Head of caudate nucleus (tissue), 42 donors: ENCODE measurements at regions of chr1 and their contacts with region 1.

Region 1: GRCh38 chr1:212665241-212666115 is 34.2 kb downstream of the BATF3 start:
- DNase-seq: peak; percentile 50 to 92 (median 80)

Region 2: DNA sequence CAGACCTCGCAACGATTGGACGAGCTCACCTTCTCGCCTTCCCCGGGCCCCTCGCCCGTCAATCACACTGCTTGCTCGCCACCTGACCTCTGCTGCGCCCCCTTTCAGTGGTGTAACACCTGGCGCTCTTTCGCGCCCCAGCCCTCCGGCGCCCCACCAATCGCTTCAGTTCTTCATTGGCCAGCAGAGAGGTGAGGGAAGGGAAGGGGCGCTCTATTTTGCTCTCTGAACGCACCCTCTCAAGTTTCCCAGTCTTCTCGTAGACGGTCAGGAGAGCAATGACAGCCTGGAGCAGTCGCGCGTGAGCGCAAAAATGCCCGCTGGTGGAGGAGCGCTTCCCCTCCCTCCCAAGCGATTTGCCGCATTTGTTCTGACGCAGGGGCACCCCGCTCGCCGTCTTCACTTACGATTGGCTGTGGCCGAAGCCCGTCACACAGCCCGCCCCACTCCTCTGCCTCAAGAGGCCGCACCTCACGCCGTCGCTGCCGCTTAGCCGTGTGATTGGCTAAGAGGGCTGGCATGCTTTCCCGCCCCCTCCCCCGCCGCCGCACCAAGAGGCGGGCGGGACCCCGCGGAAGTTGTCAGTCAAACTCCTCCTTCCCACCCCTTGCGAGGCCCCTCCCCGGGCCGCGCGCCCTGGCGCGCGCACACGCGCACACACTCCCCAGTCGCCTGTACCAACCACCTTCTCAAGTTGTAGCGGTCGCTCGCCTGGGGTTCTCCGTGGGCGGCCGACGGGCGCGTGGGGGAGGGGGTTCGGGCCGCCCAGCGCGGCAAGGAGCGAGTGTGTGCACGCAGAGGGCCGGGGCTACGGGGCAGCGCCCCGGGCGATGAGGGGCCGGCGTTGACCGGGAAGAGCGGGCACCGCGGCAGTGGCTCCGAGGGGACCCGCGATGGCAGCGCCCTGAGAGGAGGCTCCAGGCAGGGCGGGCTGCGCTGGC is 380.5 kb before region 1 on chr1 and contains the start of gene PPP2R5A:
- intact Hi-C with region 1: no loop called
- DNase-seq: peak; percentile 97 to 100 (median 99)

Region 3: DNA sequence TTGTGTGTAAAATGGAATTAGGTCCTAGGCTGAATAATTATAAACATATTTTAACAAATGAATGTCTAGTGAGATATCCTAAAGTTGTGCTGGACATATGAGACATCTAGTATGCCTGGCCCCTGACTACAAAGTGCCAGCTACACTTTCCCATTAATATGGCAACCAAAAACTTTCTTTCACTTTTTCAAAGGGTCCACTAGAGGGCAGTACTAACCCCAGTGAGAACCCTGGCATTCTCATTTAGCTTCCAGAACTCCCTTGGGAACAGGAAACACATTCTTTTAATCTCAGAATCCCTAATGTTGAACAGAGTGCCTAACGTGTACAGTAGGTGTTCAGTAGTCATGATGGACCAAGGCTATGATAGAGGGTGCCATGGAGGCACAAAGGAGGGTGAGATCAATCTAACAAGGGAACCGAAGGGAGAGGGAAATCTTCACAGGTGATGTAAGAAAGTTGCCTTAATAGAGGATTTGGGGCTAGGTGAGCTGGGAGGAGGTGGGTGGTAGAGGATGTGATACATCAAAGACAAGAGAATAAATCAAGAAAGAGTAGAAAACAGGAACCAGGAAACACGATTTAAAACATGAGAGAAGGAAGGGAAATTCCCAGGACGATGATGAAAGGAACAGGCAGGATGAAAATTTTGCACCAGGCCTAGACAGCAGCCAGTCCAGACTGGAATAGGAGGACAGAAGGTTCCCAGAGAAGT is 84.5 kb after region 1 on chr1:
- intact Hi-C with region 1: loop called (anchors 10 kb)
- DNase-seq: peak in 2 of 42 donors; percentile 49 to 52

Region 4: DNA sequence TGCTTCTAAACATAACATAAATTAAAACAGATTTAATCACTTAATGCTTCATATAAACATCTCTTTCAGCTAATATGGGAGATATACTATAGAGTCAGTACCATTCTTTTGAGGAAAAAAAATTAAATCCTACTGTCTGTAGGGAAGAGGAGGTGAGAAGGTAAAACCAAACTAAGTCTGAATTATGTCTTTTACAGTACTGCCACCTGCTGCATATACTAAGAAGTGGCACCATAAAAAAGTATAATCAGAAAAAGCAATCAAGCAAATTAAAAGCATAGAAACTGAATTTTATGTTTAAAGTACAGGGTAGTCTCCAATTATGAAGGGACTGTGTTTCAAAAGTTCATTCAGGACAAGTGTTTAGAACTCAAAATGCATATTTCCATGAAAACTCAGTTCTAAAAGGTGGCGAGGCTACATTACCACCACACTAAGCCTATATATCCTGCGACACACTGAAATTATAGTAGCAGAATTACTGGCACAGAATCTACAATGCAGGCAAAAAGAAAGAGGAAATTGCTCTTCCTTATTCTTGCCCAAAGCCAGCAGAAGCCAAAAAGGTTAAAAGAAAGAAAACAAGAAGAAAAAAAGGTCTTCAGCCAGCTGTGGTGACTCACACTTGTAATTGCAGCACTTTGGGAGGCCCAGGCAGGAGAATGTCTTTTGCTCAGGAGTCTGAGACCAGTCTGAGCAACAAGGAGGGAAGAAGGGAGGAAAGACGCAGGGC is 117.1 kb after region 1 on chr1:
- intact Hi-C with region 1: loop called (anchors 10 kb)
- DNase-seq: no peak